Prostate gland (tissue), 2 donors: ENCODE measurements at regions of chr10 and their contacts with region 1.

Region 1: GRCh38 chr10:71212318-71213126 is at the start of gene UNC5B:
- DNase-seq: peak; percentile 88
- H3K4me3 ChIP-seq: peak within 1 kb of the TSS; percentile 58 to 64
- H3K27ac ChIP-seq: peak within 1 kb of the TSS; percentile 80 to 81
- H3K4me1 ChIP-seq: peaks cover 2% of the 10 kb centered on the region
- H3K27me3 ChIP-seq: no peaks in the 10 kb centered on the region
- CTCF ChIP-seq: peak in 2 of 4 experiments; percentile 49 to 71
- POLR2A ChIP-seq: peak; percentile 96
- total RNA-seq, gene UNC5B: 12.8 to 58.4 TPM

Region 2: DNA sequence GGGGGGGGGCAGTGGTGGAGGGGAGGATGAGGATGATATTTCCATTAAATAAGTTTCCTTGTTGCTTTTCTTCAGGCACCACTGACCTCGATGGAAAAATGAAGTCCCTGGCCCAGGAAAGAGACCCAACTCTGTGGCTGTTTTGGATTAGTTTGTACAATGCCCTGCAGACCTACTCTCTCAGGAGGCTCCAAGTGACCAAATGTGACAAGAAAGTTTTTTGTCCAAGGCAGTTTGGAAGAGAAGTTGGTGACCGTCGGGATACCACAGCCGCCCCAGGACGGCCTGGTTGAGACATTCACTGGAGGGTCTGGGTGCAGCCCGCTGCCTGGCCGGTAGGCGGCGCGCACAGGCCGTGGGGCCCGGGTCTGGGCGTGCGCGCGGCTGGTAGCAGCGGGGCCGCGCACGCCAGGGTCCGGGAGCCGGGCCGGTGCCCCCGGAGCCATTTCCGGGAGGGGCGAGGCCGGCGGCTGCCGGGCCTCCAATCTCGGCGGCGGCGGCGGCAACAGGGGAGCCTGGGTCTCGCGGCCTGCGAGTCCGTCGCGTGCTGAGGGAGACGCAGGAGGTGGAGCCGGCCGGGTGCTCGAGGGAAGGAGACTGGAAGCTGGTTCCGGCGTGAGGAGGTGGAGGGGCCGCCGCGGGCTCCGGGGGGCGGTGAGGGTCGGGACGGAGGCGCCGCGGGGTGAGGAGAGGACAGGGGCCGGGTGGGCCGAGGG is 396.9 kb before region 1 on chr10 and contains the start of gene SGPL1:
- intact Hi-C with region 1: loop called (anchors 10 kb)
- DNase-seq: peak; percentile 86
- H3K4me3 ChIP-seq: peak within 1 kb of the TSS; percentile 84 to 85
- H3K27ac ChIP-seq: peak within 1 kb of the TSS; percentile 96 to 98
- H3K4me1 ChIP-seq: no peaks in the 10 kb centered on the region
- H3K27me3 ChIP-seq: no peaks in the 10 kb centered on the region
- CTCF ChIP-seq: peak; percentile 97 to 100 (median 98)
- POLR2A ChIP-seq: peak; percentile 73
- total RNA-seq, gene SGPL1: 52.6 to 64.4 TPM

Region 3: DNA sequence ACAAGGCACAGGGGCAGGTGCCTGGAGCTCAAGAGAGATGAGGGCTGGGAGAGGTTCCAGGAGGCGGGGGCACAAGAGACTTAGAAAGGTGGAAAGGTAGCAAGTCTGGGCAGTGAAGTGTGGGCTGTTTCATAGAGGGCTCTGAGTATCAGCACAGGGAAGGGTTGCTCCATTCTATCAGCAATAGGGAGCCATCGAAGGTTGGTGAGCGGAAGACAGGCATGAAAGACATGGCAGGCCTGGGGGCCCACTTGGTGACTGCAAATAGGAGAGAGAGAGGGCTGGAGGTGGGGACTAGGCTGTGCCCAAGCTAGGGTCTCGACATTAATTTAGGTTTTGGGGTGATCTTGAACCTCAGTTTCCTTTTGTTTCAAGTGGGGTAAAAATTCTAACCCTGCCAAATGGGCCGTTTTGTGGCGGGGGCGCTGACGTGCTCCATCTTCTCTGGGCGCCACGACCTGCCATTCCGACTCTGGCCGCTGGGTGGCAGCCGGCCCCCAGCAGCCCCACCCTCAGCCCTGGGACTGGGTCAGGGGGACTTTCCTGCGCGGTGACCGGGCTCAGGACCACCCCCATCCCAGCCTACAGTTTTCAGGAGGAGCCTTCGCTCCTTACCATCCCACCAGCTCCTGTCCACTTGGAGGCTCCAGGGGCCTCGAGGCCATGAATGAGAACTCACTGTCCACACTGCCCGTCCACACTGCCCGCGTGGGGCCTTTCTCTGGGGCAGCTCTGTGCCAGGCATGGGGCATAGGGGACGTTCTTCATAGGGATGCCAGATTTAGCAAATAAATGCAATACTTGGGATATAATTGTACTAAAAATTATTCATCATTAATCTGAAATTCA is 286.9 kb before region 1 on chr10:
- intact Hi-C with region 1: loop called (anchors 2 kb)
- DNase-seq: peak; percentile 23
- H3K4me3 ChIP-seq: no peak overlapping the region
- H3K27ac ChIP-seq: no peak overlapping the region
- H3K4me1 ChIP-seq: no peaks in the 10 kb centered on the region
- H3K27me3 ChIP-seq: no peaks in the 10 kb centered on the region
- CTCF ChIP-seq: peak; percentile 91 to 93 (median 91)
- POLR2A ChIP-seq: no peak

Region 4: GRCh38 chr10:71268247-71268691 is 55.7 kb after region 1 on chr10:
- intact Hi-C with region 1: loop called (anchors 2 kb)
- DNase-seq: no peak
- H3K4me3 ChIP-seq: no peak overlapping the region
- H3K27ac ChIP-seq: no peak overlapping the region
- H3K4me1 ChIP-seq: no peaks in the 10 kb centered on the region
- H3K27me3 ChIP-seq: no peaks in the 10 kb centered on the region
- CTCF ChIP-seq: peak in 3 of 4 experiments; percentile 34 to 72 (median 50)
- POLR2A ChIP-seq: no peak

Region 5: DNA sequence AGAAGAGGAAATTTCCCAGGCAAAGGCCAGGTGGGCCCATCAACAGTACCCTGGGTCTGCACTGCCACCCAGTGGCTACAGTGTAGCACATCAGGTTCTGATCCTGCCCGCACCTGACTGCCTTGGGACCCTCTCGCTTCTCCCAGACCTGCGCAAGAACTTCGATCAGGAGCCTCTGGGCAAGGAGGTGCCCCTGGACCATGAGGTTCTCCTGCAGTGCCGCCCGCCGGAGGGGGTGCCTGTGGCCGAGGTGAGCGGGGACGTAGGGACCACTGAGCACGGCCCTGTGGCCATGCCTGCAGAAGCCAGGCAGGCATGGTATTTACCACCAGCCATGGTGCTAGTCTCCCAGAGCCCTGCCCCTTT is 72.6 kb after region 1 on chr10:
- intact Hi-C with region 1: loop called (anchors 5 kb)
- DNase-seq: peak; percentile 17
- H3K4me3 ChIP-seq: no peak overlapping the region
- H3K27ac ChIP-seq: no peak overlapping the region
- H3K4me1 ChIP-seq: no peaks in the 10 kb centered on the region
- H3K27me3 ChIP-seq: no peaks in the 10 kb centered on the region
- CTCF ChIP-seq: peak; percentile 60 to 84 (median 76)
- POLR2A ChIP-seq: no peak

Region 6: DNA sequence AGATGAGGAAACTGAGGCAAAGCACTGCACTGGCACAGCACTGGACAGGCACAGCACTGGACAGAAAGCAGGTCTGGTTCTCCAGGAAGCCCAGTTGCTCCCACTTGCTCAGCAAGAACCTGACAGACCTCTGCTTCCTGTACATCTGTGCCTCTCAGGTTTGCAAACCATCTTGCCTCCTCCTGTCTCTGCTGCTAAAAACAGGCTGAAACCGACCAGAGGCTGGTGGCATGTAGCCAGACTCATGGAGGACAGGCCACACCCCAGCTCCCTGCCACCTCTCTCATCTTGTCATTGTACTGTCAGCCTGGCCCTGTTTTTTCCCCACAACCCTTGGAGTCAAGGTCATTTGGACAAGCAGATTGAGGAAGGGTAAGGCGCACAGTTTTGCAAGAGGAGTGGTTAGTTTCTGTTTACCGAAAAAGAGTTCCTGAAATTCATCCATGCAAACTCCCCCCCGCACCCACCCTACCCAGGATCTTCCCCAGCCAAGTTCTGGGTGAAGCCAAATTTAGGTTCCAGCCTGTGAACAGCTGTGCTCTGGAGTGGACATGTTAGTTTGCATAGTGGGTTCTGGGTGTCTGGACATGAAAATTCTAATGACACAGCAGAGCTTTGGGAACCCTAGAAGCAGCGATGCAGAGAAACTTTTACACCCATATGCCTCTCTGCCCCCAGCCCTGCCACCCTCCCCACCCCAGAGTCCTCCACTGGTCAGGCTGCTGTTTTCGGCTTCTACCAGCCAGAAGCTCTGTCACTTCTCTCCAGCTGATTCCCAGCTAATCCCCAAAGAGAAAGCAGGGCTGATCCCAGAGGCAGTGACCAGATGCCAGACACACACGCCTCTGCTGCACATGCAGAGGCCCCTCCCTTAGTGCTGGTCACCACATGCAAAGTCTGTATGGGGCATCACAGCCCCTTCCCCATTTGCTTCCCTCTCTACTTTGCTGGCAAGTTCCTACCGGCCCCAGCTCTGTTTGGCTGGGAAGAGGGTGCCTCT is 515.5 kb after region 1 on chr10:
- intact Hi-C with region 1: no loop called
- DNase-seq: peak; percentile 62
- H3K4me3 ChIP-seq: no peak overlapping the region
- H3K27ac ChIP-seq: peak overlapping the region; percentile 8 to 58
- H3K4me1 ChIP-seq: peaks cover 8% of the 10 kb centered on the region
- H3K27me3 ChIP-seq: no peaks in the 10 kb centered on the region
- CTCF ChIP-seq: no peak
- POLR2A ChIP-seq: no peak